ENCODE measurements at regions of chr3 and their contacts with region 1.

Region 1: DNA sequence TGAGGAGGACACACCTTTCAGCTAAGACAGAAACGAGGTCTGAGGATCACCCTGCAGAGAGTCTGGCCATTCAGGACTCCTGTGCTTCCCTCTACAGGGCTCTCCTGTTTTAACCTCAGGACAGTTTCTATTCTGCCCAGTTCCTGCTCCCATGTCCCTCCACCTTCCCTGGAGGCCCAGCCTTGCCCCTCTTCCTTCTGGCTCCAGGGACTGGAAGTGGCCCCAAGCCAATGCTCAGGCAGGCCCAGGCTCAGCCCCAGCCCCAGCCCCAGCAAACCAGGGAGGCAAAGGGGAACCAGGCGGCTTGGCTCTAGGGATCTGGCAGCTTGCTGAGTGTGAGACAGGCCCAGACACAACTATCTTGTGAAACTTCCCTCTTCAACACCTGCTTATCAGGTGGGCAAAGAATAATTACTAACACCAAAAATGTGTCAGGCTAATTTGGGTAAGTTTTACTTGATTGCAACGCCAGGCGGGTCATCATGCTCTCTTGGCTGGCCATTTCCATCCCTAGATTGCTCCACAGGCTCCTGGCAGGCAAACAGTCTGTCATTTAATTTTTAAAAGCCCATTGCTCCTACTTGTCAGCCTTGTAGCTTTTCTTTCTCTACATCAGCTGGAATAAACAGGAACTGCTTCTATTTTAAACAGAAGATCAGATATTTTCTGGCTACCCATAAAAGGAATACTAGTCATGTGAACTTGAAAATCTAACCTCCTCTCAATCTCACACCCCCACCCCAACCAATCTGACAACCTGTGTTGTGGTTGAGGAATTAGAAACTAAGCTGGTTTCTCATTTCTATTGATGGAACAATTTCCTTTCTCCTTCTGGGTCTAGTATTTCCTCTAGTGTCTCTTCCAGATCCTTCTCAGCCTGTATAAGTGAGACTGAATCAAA is 33.5 kb downstream of the UPK1B start:
- DNase-seq: peak; percentile 39
- H3K4me3 Mint-ChIP-seq: peak overlapping the region; percentile 12
- H3K27ac Mint-ChIP-seq: peak overlapping the region; percentile 26
- H3K4me1 Mint-ChIP-seq: peaks cover 62% of the 10 kb centered on the region
- H3K27me3 Mint-ChIP-seq: no peaks in the 10 kb centered on the region
- CTCF ChIP-seq: no peak

Region 2: GRCh38 chr3:118884748-118885206 is 322.1 kb before region 1 on chr3:
- CTCF ChIA-PET with region 1: no interaction called
- intact Hi-C with region 1: no loop called
- DNase-seq: peak; percentile 87
- H3K4me3 Mint-ChIP-seq: no peak overlapping the region
- H3K27ac Mint-ChIP-seq: no peak overlapping the region
- H3K4me1 Mint-ChIP-seq: no peaks in the 10 kb centered on the region
- H3K27me3 Mint-ChIP-seq: peaks cover 32% of the 10 kb centered on the region
- CTCF ChIP-seq: peak; percentile 78

Region 3: GRCh38 chr3:119145500-119146191 is 61.2 kb before region 1 on chr3 and contains the start of gene TEX55:
- CTCF ChIA-PET with region 1: interaction called, 6 read pairs
- intact Hi-C with region 1: loop called (anchors 1 kb)
- DNase-seq: peak; percentile 35
- H3K4me3 Mint-ChIP-seq: no peak within 1 kb of the TSS
- H3K27ac Mint-ChIP-seq: peak within 1 kb of the TSS; percentile 21
- H3K4me1 Mint-ChIP-seq: peaks cover 18% of the 10 kb centered on the region
- H3K27me3 Mint-ChIP-seq: no peaks in the 10 kb centered on the region
- CTCF ChIP-seq: no peak
- total RNA-seq, gene TEX55: not detected in 2 replicates

Region 4: GRCh38 chr3:119184796-119185570 is 21.9 kb before region 1 on chr3:
- CTCF ChIA-PET with region 1: no interaction called
- intact Hi-C with region 1: loop called (anchors 2 kb)
- DNase-seq: peak; percentile 47
- H3K4me3 Mint-ChIP-seq: peak overlapping the region; percentile 50
- H3K27ac Mint-ChIP-seq: peak overlapping the region; percentile 90
- H3K4me1 Mint-ChIP-seq: peaks cover 71% of the 10 kb centered on the region
- H3K27me3 Mint-ChIP-seq: no peaks in the 10 kb centered on the region
- CTCF ChIP-seq: no peak

Region 5: GRCh38 chr3:119219069-119219468 is 12.2 kb after region 1 on chr3:
- CTCF ChIA-PET with region 1: no interaction called
- intact Hi-C with region 1: no loop called
- DNase-seq: no peak
- H3K4me3 Mint-ChIP-seq: no peak overlapping the region
- H3K27ac Mint-ChIP-seq: no peak overlapping the region
- H3K4me1 Mint-ChIP-seq: peaks cover 9% of the 10 kb centered on the region
- H3K27me3 Mint-ChIP-seq: no peaks in the 10 kb centered on the region
- CTCF ChIP-seq: no peak

Region 6: DNA sequence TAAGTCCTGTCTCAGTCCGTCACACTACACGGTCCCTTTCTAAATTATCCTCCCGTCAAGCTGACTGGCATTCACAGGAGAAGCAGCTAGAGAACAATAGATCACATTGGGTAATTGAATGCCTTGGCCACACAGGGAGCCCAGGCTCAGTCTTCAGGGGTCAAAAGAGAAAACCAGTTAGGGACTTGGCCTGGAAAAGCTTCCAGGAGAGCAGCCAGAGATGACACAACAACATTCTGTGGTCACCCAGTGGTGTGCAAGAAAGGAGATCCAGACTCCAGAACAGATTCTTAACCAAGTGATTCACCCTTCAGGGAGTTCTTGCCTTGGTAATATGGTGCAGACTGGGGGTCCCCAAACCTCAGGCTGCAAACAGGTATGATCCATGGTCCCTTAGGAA is 103.2 kb after region 1 on chr3:
- CTCF ChIA-PET with region 1: no interaction called
- intact Hi-C with region 1: no loop called
- DNase-seq: no peak
- H3K4me3 Mint-ChIP-seq: no peak overlapping the region
- H3K27ac Mint-ChIP-seq: no peak overlapping the region
- H3K4me1 Mint-ChIP-seq: no peaks in the 10 kb centered on the region
- H3K27me3 Mint-ChIP-seq: no peaks in the 10 kb centered on the region
- CTCF ChIP-seq: no peak

Region 7: GRCh38 chr3:119969759-119970158 is 762.9 kb after region 1 on chr3:
- CTCF ChIA-PET with region 1: no interaction called
- intact Hi-C with region 1: no loop called
- DNase-seq: no peak
- H3K4me3 Mint-ChIP-seq: no peak overlapping the region
- H3K27ac Mint-ChIP-seq: no peak overlapping the region
- H3K4me1 Mint-ChIP-seq: no peaks in the 10 kb centered on the region
- H3K27me3 Mint-ChIP-seq: no peaks in the 10 kb centered on the region
- CTCF ChIP-seq: no peak